ENCODE measurements at regions of chr15 and their contacts with region 1.

Region 1: DNA sequence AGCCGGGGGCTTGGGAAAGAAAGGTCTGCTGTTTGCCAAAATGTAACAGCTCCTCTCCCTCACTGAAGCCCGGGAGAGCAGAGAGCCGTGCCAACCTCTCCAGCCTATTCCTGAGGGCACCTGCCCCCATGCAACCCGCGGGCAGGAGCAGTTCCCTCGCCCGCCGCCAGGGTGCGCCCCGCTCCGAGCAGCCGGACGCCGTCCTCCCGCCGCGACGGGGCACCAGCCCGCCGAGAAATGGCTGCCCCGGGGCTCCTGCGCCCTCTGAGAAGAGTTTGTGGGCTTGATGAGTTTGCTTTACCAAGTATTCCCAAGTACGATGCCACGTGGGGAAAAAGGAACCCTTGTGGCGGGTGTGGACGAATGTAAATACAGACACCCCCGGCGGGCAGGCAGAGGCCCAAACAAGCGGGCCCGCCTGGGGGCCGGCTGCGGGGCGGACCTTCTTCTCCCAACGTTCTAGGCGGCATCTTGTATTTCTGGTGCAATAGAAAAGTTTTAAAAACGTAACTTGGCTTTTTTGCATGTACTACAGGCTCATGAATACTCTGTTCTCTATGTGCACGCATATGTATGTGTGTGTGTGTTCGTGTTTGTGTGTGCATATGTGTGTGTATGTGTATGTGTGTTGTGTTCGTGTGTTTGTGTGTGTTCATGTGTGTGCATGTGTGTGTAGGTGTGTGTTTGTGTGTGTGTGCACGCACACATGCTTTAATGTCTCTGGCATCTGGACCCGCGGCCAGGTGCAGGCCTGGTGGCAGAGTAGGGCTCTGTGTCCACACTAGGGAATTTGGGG is 162.9 kb downstream of the CHSY1 start:
- DNase-seq: peak; percentile 73 to 88 (median 88)
- ATAC-seq: peak; percentile 94
- H3K4me3 ChIP-seq: no peak overlapping the region
- H3K4me1 ChIP-seq: peaks cover 3% of the 10 kb centered on the region
- CTCF ChIP-seq: peak; percentile 99

Region 2: DNA sequence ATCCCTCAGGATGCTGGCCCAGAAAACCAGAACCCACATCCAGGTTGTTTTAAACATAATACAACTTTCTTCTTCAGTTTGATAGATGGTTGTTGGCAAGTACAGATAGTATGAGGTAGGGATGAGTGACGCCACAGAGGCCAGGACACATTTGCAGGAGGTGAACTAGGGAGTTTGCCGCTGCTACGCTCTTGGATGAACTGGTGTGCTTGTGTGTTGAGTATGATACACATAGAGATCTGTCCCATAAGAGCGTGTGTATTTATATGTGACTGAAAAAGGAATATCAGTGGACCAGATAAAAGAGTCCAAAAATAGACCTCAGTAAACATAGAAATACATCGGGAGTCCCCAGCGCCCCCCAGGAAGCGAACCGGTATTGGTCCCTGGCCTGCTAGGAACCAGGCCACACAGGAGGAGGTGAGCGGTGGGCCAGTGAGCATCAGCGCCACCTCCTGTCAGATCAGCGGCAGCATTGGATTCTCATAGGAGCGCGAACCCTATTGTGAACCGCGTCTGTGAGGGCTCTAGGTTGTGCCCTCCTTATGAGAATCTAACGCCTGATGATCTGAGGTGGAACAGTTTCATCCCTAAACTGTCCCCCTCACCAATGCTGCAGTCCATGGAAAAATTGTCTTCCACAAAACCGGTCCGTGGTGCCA is 71.8 kb before region 1 on chr15:
- intact Hi-C with region 1: no loop called
- DNase-seq: peak in 1 of 3 donors; percentile 8
- ATAC-seq: no peak
- H3K4me3 ChIP-seq: no peak overlapping the region
- H3K4me1 ChIP-seq: no peaks in the 10 kb centered on the region
- CTCF ChIP-seq: no peak

Region 3: GRCh38 chr15:101258238-101259144 is 169.5 kb after region 1 on chr15:
- intact Hi-C with region 1: loop called (anchors 5 kb)
- DNase-seq: peak in 1 of 3 donors; percentile 77
- ATAC-seq: peak; percentile 86
- H3K4me3 ChIP-seq: no peak overlapping the region
- H3K4me1 ChIP-seq: no peaks in the 10 kb centered on the region
- CTCF ChIP-seq: peak; percentile 75

Measured in mucosa of descending colon (tissue), 3 donors.